ENCODE measurements at regions of chr4 and their contacts with region 1.

Region 1: GRCh38 chr4:171203425-171203824 is 609.8 kb upstream of the GALNTL6 start:
- DNase-seq: no peak

Region 2: DNA sequence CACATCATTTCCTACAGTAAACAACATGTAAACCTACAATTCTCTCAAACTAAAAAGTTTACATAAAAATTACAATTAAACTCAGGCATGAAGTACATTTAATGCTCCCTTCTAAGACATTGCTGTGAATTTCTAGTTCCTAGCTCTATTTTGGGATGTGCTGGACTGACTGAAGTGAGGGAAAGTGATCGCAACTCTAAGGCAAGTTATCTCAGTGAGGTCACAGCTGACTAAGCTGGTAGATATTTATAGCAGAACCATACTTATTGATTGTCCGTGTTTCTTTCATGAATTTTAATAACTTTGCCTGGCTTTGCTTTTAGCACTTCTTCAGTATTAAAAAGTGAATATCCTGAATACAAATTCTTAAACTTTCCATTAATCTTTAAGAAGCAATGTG is 39.4 kb after region 1 on chr4:
- intact Hi-C with region 1: no loop called
- DNase-seq: no peak

Region 3: DNA sequence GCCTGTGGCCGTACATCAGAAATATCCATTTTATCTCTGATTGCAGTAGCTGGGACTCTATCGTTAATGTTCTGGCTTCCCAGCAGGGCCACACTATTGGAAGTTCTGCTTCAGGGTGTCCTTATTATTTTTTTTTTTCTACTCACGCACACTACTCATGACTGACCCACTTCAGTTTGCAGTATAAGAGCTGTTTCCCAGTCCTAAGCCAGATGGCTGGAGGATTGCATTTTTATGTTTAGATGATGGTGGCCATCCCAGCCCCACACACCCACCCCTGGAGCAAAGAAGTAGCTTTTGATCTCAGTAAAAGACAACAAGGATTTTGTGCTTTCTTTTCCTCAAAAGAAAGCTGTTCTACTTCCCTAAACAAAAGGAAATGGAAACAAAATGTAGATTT is 52.8 kb after region 1 on chr4:
- intact Hi-C with region 1: loop called in 1 of 2 experiments (anchors 2 kb)
- DNase-seq: no peak

Region 4: DNA sequence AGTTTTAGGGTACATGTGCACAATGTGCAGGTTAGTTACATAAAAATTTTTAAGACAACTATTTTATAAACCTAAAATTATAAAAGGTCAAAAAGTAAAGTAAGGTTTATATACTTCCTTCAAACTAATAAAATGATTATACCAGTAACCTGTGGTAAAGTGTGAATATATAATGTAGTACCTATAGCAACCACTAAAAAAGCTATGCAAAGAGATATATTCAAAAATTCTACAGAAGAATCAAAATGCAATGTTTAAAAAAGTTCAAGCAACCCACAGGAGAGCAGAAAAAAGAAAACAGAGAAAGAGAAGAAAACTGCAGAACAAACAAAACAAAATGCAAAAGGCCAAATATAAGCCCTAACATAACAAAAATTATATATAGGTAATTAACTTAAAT is 230.2 kb after region 1 on chr4:
- intact Hi-C with region 1: no loop called
- DNase-seq: no peak